ENCODE measurements at regions of chr12 and their contacts with region 1.

Region 1: DNA sequence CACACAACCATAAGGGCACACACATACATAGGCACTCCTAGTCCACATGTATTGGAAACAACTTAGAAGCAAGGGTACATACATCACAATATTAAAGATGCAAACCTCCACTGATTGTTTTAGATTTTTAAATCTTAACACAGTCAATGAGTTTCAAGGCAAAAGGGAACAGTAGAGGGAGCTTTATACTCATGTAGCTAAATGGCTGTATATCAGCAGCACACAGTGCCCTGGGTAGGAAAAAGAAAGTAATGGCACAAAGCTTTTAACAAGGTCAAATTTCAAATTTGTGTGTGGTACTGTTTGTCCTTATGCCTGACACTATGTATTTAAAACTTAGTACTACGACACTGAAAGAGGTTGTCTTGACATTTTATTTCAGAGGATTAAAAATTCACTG is 262.0 kb downstream of the MED13L start:
- DNase-seq: peak in 8 of 42 donors; percentile 11 to 47 (median 16)

Region 2: DNA sequence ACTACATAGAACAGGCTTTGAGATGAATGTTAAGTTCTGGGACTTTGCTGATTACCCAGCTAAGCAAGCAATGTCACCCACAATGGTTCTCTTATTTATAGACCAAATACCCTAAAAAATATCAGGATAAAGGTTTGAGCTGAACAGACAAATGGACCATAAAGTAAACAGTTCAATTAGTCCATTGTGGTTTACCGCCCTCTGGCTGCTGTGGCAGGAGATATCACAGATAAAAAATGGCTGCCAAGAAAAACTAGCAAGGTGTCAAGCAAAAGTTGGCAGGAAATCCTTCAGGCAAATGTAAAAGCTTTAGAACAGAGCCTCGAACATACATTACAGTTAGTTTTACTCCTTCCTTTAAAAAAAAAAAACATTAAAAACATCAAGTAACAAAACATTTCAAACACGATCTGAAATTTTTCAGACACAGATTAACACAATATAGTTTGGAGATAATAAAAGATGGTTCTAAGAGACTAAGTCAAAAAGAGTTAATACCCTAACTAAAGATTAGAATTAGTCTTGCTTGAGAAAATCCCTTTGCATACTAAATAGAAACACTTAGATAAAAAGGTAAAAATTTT is 220.7 kb after region 1 on chr12:
- intact Hi-C with region 1: loop called (anchors 2 kb)
- DNase-seq: peak in 36 of 42 donors; percentile 8 to 83 (median 51)